ENCODE measurements at regions of chr13 and their contacts with region 1.

Region 1: GRCh38 chr13:48580185-48580803 is 47.4 kb upstream of the RCBTB2 start:
- DNase-seq: peak in 5 of 10 donors; percentile 34 to 78 (median 63)

Region 2: DNA sequence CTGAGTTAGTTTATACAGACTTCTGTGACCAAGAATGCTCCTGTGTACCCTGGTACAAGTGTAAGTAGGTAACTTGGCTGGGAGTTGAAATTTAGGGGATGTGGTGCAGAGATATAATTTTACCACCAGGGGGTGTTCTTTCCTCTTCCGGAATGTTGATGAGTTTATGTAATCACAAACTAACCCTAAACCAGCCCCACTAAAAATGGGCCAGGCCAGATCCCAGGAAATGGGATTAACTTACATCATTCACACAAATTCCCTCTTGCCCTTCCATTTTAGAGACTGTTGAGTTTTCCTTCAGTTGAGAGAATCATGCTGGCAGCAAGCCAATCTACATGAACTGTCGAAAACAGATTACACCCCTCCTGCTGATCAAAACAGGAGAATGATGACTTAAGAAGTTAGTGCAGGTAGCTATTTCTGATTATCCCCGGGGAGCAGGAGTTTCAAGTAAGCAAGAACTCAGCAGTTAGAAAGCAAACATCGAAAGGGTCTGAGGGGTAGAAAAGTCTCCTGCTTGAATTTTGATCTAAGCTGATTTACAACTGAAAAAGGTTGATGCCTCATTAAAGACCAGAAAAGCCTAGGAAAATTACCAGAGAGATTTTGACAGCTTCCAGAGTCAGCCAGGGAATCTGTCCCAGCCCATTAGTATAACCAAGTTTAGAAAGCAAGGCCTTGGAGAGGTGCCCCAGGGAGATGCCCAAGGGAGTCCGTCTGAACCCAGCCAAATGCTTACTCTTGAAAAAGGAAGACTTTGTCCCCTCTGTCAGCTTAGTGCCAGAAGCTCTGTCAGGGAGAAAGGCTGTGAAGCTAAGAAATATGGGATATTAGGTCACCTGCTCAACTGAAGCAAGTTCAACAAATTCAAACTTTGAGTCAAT is 453.1 kb before region 1 on chr13:
- intact Hi-C with region 1: loop called (anchors 5 kb)
- DNase-seq: peak in 4 of 10 donors; percentile 5 to 23 (median 12)

Region 3: DNA sequence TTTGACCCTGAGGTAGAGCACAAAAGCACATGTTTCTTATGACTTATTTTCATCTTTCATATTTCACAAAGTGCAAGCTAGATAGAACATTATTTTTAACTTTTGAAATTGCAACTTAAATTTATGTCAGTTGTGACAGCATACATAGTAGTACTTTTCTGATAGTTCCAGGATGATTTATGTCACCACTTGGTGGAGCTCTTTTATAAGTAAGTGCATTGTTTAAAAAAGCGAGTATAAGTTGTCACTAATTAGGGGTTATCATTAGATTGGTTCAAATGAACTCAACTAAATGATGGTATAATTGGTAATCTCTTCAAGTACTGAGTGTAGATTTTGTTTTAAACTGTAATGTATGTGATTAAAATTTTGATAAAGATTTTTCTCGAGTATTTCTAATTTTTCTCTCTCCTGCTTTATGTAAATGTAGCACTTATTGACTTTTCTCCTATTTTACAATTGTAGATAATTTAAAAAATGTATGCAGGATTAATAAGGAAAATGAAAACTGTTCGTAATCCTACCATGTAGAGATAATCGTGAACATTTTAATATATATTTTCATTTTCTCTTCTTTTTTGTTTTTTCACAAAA is 245.7 kb before region 1 on chr13:
- intact Hi-C with region 1: loop called (anchors 1 kb)
- DNase-seq: no peak

Region 4: GRCh38 chr13:48515732-48516131 is 64.6 kb before region 1 on chr13:
- intact Hi-C with region 1: no loop called
- DNase-seq: peak in 2 of 10 donors; percentile 39 to 84

Region 5: GRCh38 chr13:48539550-48539949 is 40.7 kb before region 1 on chr13:
- intact Hi-C with region 1: loop called (anchors 5 kb)
- DNase-seq: no peak

Region 6: GRCh38 chr13:49214917-49215376 is 634.7 kb after region 1 on chr13:
- intact Hi-C with region 1: no loop called
- DNase-seq: peak in 2 of 10 donors; percentile 12 to 81

Measured in posterior cingulate gyrus (tissue), 11 donors.